SK-N-SH (cell line): ENCODE measurements at regions of chr6 and their contacts with region 1.

Region 1: GRCh38 chr6:137013738-137014602 is 30.8 kb downstream of the IL20RA start:
- DNase-seq: peak; percentile 56
- H3K4me3 ChIP-seq: no peak overlapping the region
- H3K27ac ChIP-seq: peak overlapping the region in 1 of 2 experiments; percentile 96; a peak in 2 of 4 replicates
- H3K4me1 ChIP-seq: peaks cover 0 to 18% of the 10 kb centered on the region in 2 experiments; a peak in 2 of 4 replicates
- H3K27me3 ChIP-seq: no peaks in the 10 kb centered on the region
- CTCF ChIP-seq: peak; percentile 54
- EP300 ChIP-seq: peak in 1 of 2 experiments; percentile 93; a peak in 2 of 4 replicates
- RAD21 ChIP-seq: peak; percentile 78

Region 2: GRCh38 chr6:136077834-136078576 is 936.0 kb before region 1 on chr6:
- CTCF ChIA-PET with region 1: no interaction called
- POLR2A ChIA-PET with region 1: no interaction called
- DNase-seq: peak; percentile 32
- H3K4me3 ChIP-seq: no peak overlapping the region
- H3K27ac ChIP-seq: peak overlapping the region; percentile 78 to 97
- H3K4me1 ChIP-seq: peaks cover 6 to 8% of the 10 kb centered on the region in 2 experiments
- H3K27me3 ChIP-seq: no peaks in the 10 kb centered on the region
- CTCF ChIP-seq: no peak
- EP300 ChIP-seq: peak; percentile 74 to 95
- RAD21 ChIP-seq: peak; percentile 17; the same call in 1 of the 2 replicates

Region 3: DNA sequence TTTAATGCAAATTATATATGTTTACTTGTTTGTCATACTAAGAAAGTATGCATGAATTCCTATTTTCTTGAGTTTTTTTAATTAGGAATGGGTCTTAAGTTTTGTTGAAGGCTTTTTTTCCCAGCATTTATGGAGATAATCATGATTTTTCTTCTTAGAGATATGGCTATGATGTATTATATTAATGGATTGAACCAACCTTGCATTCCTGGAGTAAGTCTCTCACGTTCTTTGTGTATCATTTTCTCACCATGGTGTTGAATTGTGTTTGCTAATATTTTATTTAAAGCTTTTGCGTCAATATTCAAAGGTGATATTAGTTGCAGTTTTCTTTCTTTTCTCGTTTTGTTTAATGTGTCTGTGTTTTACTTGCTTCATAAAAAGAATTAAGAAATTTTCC is 140.2 kb before region 1 on chr6:
- CTCF ChIA-PET with region 1: no interaction called
- POLR2A ChIA-PET with region 1: no interaction called
- DNase-seq: no peak
- H3K4me3 ChIP-seq: no peak overlapping the region
- H3K27ac ChIP-seq: no peak overlapping the region
- H3K4me1 ChIP-seq: no peaks in the 10 kb centered on the region; a peak in 1 of 4 replicates
- H3K27me3 ChIP-seq: no peaks in the 10 kb centered on the region
- CTCF ChIP-seq: no peak
- EP300 ChIP-seq: no peak
- RAD21 ChIP-seq: no peak

Region 4: GRCh38 chr6:136930528-136930927 is 83.4 kb before region 1 on chr6:
- CTCF ChIA-PET with region 1: no interaction called
- POLR2A ChIA-PET with region 1: no interaction called
- DNase-seq: no peak
- H3K4me3 ChIP-seq: no peak overlapping the region
- H3K27ac ChIP-seq: no peak overlapping the region
- H3K4me1 ChIP-seq: no peaks in the 10 kb centered on the region; a peak in 1 of 4 replicates
- H3K27me3 ChIP-seq: no peaks in the 10 kb centered on the region
- CTCF ChIP-seq: no peak
- EP300 ChIP-seq: no peak
- RAD21 ChIP-seq: no peak

Region 5: DNA sequence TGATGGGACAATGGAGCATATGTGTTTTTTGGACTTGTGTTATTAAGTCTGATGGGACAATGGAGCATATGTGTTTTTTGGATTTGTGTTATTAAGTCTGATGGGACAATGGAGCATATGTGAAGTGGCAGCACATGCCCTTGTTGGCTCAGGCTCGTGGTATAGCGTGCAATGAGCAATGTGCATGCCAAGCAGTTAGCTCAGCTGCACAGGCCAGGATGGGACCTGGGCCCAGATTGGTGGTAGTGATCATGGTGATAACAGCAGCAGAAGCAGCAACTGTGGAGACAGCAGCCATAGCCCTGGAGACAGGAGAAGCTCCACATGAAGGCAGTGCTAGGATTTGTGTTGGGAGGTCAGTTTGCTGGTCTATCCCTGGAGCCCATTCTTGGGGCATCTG is 30.3 kb before region 1 on chr6:
- CTCF ChIA-PET with region 1: interaction called, 17 read pairs
- POLR2A ChIA-PET with region 1: interaction called, 17 read pairs
- DNase-seq: no peak
- H3K4me3 ChIP-seq: no peak overlapping the region
- H3K27ac ChIP-seq: peak overlapping the region in 1 of 2 experiments; percentile 100; a peak in 2 of 4 replicates
- H3K4me1 ChIP-seq: peaks cover 0 to 59% of the 10 kb centered on the region in 2 experiments; a peak in 2 of 4 replicates
- H3K27me3 ChIP-seq: no peaks in the 10 kb centered on the region
- CTCF ChIP-seq: no peak
- EP300 ChIP-seq: peak in 1 of 2 experiments; percentile 83; a peak in 2 of 4 replicates
- RAD21 ChIP-seq: no peak

Region 6: DNA sequence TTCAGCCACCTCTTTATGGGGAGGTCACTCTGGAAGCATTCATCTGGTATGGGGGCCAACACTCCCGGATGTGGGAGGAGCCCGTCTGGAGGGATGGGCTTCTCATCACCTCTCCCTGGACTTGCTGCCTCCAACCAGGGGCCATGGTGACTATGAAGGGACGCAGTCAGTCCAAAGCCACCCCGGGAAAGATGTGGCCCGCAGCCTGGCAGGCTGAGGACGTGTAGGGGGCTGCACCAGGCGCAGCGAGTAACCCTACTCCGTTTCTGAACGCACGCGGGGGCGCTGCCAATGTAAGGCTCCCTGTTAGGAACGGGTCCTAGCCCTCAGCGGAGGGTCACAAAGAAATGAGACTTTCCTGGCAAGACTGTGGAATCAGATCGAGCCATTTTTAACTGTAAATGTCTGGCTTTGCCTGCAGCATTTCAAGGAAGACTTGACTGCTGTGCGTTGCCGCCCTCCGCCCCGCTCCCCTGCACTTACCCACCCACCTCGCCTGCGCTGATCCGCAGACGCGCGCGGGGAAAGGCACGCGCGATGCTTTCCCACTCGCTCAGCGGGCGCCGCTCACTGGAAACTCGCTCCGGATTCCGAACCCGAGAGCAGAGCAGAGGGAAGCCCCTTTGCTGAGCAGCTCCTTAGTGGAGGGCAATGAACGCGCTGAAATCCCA is 24.3 kb before region 1 on chr6:
- CTCF ChIA-PET with region 1: interaction called, 16 read pairs
- POLR2A ChIA-PET with region 1: interaction called, 17 read pairs
- DNase-seq: peak; percentile 87
- H3K4me3 ChIP-seq: peak overlapping the region; percentile 42 to 49
- H3K27ac ChIP-seq: peak overlapping the region in 1 of 2 experiments; percentile 100; a peak in 2 of 4 replicates
- H3K4me1 ChIP-seq: peaks cover 0 to 32% of the 10 kb centered on the region in 2 experiments; a peak in 2 of 4 replicates
- H3K27me3 ChIP-seq: peaks cover 9% of the 10 kb centered on the region; the same call in 1 of the 2 replicates
- CTCF ChIP-seq: no peak
- EP300 ChIP-seq: 0 out of 4 replicates have a peak, but pooled peaks of 1 of the 2 experiments have one; percentile 8
- RAD21 ChIP-seq: no peak

Region 7: DNA sequence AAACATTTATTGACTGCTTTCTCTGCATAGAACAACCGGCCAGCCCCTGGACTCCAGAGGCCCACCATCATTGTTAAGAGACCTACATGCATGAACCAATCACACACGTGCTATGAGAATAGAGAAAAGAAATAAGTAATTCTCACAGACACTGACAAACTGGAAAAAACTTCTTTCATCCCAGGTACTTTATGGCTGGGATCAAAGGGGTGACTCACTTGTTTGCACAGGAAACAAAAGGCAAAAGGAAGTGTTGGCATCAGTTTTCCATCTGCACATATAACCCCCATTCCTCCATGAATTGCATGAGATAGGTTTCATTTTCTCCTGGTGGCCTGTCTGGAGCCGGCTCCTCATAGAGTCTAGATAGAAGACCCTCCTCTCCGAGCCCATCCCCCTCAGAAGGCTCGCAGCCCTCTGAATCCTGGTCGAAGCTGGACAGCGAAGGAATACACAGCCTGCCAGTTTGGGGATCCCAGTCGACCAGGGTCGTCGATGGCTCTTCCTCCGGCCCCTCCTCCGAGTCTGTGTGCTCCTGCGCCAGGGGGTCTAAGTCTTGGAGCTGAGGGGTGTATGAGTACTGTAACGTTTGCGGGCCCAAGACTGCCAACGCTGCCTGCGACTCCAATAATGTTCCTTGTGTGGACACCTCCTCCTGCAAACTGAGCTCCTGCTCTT is 12.5 kb before region 1 on chr6:
- CTCF ChIA-PET with region 1: interaction called, 11 read pairs
- POLR2A ChIA-PET with region 1: no interaction called
- DNase-seq: no peak
- H3K4me3 ChIP-seq: no peak overlapping the region
- H3K27ac ChIP-seq: no peak overlapping the region; a peak in 1 of 4 replicates
- H3K4me1 ChIP-seq: peaks cover 0 to 2% of the 10 kb centered on the region in 2 experiments; a peak in 2 of 4 replicates
- H3K27me3 ChIP-seq: no peaks in the 10 kb centered on the region
- CTCF ChIP-seq: no peak
- EP300 ChIP-seq: no peak
- RAD21 ChIP-seq: no peak